ENCODE measurements at regions of chr13 and their contacts with region 1.

Region 1: DNA sequence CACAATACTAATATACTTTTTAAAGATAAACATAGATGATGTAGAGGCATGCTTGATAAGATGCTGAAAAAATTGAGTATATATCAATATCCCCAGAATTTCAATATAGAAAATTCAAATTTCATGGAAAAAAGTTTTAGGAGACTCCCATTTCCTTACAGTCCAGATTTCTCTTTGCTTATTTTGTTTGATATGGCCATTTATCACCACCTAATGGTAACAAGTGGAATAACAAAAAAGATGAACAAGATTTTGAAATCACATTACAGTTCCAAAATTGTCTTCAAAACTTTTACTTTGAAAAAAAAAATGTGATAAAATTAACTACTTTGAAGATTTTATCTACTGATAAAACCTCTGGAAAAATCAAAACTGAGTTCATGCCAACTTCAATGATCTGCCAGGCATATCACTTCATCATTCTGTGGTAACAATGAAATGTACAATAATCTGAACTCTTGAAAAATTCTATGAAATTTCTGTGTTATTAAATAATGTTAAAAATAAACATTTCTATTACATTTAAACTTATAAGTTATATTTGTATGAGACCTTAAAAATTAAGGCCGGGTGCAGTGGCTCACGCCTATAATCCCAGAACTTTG is 17.5 kb downstream of the MIPEP start:
- DNase-seq: peak; percentile 27
- H3K4me3 ChIP-seq: no peak overlapping the region
- H3K27ac ChIP-seq: no peak overlapping the region
- H3K4me1 ChIP-seq: peaks cover 14% of the 10 kb centered on the region
- H3K27me3 ChIP-seq: no peaks in the 10 kb centered on the region
- CTCF ChIP-seq: peak in 1 of 2 donors; percentile 41
- POLR2A ChIP-seq: no peak

Region 2: GRCh38 chr13:23433171-23434153 is 438.3 kb before region 1 on chr13 and contains the start of gene SACS:
- CTCF ChIA-PET with region 1: no interaction called
- POLR2A ChIA-PET with region 1: no interaction called
- dilution Hi-C with region 1: no loop called
- intact Hi-C with region 1: no loop called
- DNase-seq: peak; percentile 61
- H3K4me3 ChIP-seq: peak within 1 kb of the TSS; percentile 42 to 82 (median 48)
- H3K27ac ChIP-seq: peak within 1 kb of the TSS; percentile 21
- H3K4me1 ChIP-seq: peaks cover 14% of the 10 kb centered on the region
- H3K27me3 ChIP-seq: no peaks in the 10 kb centered on the region
- CTCF ChIP-seq: no peak
- POLR2A ChIP-seq: peak; percentile 30
- total RNA-seq, gene SACS: 72.7 and 73.1 TPM in 2 replicates

Region 3: GRCh38 chr13:23510979-23511735 is 360.6 kb before region 1 on chr13:
- CTCF ChIA-PET with region 1: no interaction called
- POLR2A ChIA-PET with region 1: no interaction called
- dilution Hi-C with region 1: no loop called
- intact Hi-C with region 1: loop called (anchors 2 kb)
- DNase-seq: peak; percentile 18
- H3K4me3 ChIP-seq: no peak overlapping the region
- H3K27ac ChIP-seq: no peak overlapping the region
- H3K4me1 ChIP-seq: no peaks in the 10 kb centered on the region
- H3K27me3 ChIP-seq: peaks cover 3% of the 10 kb centered on the region in 2 experiments
- CTCF ChIP-seq: no peak
- POLR2A ChIP-seq: no peak

Region 4: GRCh38 chr13:23579072-23579895 is 292.4 kb before region 1 on chr13:
- CTCF ChIA-PET with region 1: interaction called, 5 read pairs
- POLR2A ChIA-PET with region 1: no interaction called
- dilution Hi-C with region 1: no loop called
- intact Hi-C with region 1: loop called (anchors 1 kb)
- DNase-seq: peak; percentile 81
- H3K4me3 ChIP-seq: peak overlapping the region; percentile 16 to 64 (median 53)
- H3K27ac ChIP-seq: no peak overlapping the region
- H3K4me1 ChIP-seq: peaks cover 13% of the 10 kb centered on the region
- H3K27me3 ChIP-seq: peaks cover 27 to 41% of the 10 kb centered on the region in 2 experiments
- CTCF ChIP-seq: no peak
- POLR2A ChIP-seq: no peak

Region 5: DNA sequence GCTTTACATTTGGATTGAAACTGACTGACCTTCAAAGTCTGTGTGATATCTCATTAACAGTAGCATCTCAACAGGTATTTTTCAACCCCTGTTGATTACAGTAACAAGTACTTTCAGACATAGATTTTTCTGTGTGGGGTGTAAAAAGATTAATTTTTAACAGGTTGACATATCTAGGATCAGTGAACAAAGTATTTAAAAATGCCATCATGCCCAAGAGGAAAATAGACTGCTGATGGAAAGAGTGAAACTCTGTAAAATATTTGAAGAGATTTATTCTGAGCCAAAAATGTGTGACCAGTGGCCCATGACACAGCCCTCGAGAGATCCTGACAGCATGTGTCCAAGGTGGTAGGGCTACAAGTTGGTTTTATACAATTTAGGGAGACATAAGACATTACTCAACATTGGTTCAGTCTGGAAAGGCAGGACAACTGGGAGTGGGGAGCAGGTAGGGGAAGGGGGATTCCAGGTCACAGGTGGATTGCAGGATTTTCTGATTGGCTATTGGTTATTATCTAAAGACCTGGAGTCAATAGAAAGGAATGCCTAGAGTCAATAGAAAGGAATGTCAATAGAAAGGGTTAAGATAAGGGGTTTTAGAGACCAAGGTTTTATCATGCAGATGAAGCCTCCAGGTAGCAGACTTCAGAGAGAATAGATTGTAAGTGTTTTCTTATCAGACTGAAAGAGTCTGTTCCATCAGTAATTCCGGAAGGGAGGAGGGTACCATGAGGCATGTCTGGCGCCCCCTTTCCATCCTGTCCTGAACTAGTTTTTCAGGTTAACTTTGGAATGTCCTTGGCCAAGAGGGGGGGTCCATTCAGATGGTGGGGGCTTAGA is 272.4 kb before region 1 on chr13:
- CTCF ChIA-PET with region 1: interaction called, 6 read pairs
- POLR2A ChIA-PET with region 1: no interaction called
- dilution Hi-C with region 1: no loop called
- intact Hi-C with region 1: loop called (anchors 1 kb)
- DNase-seq: no peak
- H3K4me3 ChIP-seq: no peak overlapping the region
- H3K27ac ChIP-seq: no peak overlapping the region
- H3K4me1 ChIP-seq: peaks cover 3% of the 10 kb centered on the region
- H3K27me3 ChIP-seq: peaks cover 0 to 4% of the 10 kb centered on the region in 2 experiments
- CTCF ChIP-seq: no peak
- POLR2A ChIP-seq: no peak

Region 6: DNA sequence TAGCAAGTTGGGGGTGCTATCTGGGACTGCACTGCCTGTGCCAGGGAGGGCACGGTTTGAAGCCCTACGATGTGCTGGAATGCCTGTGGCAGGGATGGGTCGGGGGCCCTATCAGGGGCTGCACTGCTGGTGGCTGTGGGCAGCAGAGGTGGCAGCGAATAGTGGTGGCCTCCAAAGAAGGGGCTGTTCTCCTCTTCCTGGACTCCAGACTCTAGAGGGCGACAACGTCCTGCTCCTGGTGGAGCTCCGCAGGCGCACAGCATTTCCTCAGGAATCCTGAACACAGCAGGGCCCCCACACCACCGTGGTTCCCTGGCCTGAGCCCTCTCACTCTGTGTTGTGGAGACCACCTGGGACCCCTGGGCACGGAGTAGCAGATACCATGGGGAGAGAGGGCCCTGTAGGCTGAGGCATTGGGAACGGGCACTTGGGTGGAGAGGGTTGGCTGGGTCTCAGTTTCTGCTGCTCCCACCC is 155.9 kb before region 1 on chr13:
- CTCF ChIA-PET with region 1: interaction called, 12 read pairs
- POLR2A ChIA-PET with region 1: no interaction called
- dilution Hi-C with region 1: no loop called
- intact Hi-C with region 1: loop called (anchors 2 kb)
- DNase-seq: no peak
- H3K4me3 ChIP-seq: no peak overlapping the region
- H3K27ac ChIP-seq: no peak overlapping the region
- H3K4me1 ChIP-seq: no peaks in the 10 kb centered on the region
- H3K27me3 ChIP-seq: no peaks in the 10 kb centered on the region
- CTCF ChIP-seq: peak; percentile 6 to 32
- POLR2A ChIP-seq: no peak

Region 7: GRCh38 chr13:23771552-23771951 is 100.2 kb before region 1 on chr13:
- CTCF ChIA-PET with region 1: no interaction called
- POLR2A ChIA-PET with region 1: no interaction called
- dilution Hi-C with region 1: no loop called
- intact Hi-C with region 1: no loop called
- DNase-seq: no peak
- H3K4me3 ChIP-seq: no peak overlapping the region
- H3K27ac ChIP-seq: no peak overlapping the region
- H3K4me1 ChIP-seq: no peaks in the 10 kb centered on the region
- H3K27me3 ChIP-seq: no peaks in the 10 kb centered on the region
- CTCF ChIP-seq: no peak
- POLR2A ChIP-seq: no peak

Region 8: GRCh38 chr13:23794267-23795161 is 77.2 kb before region 1 on chr13:
- CTCF ChIA-PET with region 1: no interaction called
- POLR2A ChIA-PET with region 1: no interaction called
- dilution Hi-C with region 1: no loop called
- intact Hi-C with region 1: loop called (anchors 2 kb)
- DNase-seq: peak; percentile 91
- H3K4me3 ChIP-seq: peak overlapping the region in 1 of 3 experiments; percentile 47
- H3K27ac ChIP-seq: peak overlapping the region; percentile 85
- H3K4me1 ChIP-seq: peaks cover 22% of the 10 kb centered on the region
- H3K27me3 ChIP-seq: no peaks in the 10 kb centered on the region
- CTCF ChIP-seq: no peak
- POLR2A ChIP-seq: peak; percentile 28

Region 9: DNA sequence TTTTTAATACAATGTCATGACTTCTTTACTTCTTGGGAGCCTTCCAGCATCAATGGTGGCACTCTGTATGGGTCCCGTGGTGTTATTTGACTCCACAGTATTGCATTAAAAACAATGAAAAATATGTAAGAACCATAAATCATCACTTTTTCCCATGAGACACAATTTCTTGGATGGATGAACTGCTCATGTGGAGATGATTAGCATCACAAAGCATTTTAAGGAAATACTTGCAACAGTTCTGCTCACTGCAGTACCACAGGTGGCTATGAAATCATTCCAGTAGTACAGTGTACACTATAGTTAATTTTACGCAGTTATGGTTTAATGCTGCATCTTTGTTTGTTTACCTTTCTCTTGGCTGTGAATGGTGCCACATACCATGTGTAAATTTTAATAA is 62.8 kb after region 1 on chr13:
- CTCF ChIA-PET with region 1: no interaction called
- POLR2A ChIA-PET with region 1: no interaction called
- dilution Hi-C with region 1: no loop called
- intact Hi-C with region 1: no loop called
- DNase-seq: no peak
- H3K4me3 ChIP-seq: no peak overlapping the region
- H3K27ac ChIP-seq: no peak overlapping the region
- H3K4me1 ChIP-seq: peaks cover 10% of the 10 kb centered on the region
- H3K27me3 ChIP-seq: no peaks in the 10 kb centered on the region
- CTCF ChIP-seq: no peak
- POLR2A ChIP-seq: no peak